Transverse colon (tissue), 4 donors: ENCODE measurements at regions of chr7 and their contacts with region 1.

Region 1: DNA sequence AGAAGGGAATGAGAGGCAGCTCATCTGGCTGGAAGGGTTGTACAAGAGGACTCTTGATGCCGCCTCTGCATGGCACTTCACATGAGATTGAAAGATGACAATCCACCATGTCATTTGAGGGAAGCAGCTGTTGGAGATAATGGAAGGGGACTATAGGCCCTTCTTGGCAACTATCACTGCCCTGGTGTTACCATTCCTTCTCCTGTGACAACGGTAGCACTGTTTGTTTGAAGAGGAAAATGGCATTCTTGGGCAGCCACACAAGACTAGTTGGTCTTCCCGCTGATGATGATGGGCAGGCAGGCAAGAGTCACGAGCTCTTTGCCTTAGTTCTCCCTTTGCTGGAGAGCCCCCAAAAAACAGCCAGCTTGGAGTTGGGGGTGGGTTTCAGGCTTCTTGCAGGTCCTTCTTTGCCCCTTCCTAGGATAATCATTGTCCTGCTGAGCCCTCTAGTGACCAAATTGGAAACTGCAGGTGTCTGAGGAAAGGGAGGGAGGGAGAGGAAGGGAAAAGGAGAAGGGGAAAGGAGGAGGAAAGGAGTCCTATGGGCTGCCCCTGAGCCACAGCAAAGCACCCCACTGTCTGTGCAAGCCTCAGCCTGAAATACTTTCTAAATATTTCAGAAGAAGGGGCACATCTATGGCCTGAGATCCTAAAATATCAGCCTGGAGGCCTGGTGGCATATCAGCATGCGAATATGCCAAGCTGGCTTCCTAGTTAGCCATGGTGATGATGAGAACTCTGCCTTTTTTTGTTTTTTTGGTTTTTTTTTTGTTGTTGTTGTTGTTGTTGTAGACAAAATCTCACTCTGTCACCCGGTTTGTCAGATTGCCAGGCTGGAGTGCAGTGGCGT is 165.6 kb upstream of the KMT2E start:
- DNase-seq: peak; percentile 52
- H3K4me3 ChIP-seq: no peak overlapping the region
- H3K27ac ChIP-seq: no peak overlapping the region
- H3K4me1 ChIP-seq: no peaks in the 10 kb centered on the region
- H3K27me3 ChIP-seq: peaks cover 5% of the 10 kb centered on the region
- CTCF ChIP-seq: peak; percentile 64 to 85 (median 83)
- EP300 ChIP-seq: no peak
- POLR2A ChIP-seq: no peak

Region 2: DNA sequence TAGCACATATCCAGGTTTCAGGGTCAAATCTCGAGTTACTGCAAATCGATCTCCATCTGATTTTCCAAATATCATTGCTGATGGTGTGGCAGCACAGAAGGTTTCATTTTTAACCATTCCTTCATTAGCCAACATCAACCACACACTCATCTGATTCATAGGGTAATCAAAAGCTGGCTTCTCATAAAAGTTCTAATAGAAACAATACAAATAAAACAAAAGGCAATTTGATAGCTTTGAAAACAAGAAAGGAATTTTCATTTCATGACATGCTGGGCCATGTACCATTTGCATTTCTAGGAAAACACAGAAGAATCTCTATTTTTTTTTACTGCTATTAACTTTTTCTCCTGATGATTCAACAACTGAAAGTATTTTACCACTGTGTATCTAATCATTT is 1254.7 kb before region 1 on chr7:
- in situ Hi-C with region 1: loop called in 1 of 4 experiments (anchors 25 kb)
- intact Hi-C with region 1: no loop called
- DNase-seq: no peak
- H3K4me3 ChIP-seq: no peak overlapping the region
- H3K27ac ChIP-seq: no peak overlapping the region
- H3K4me1 ChIP-seq: no peaks in the 10 kb centered on the region
- H3K27me3 ChIP-seq: no peaks in the 10 kb centered on the region
- CTCF ChIP-seq: no peak
- EP300 ChIP-seq: no peak
- POLR2A ChIP-seq: no peak

Region 3: DNA sequence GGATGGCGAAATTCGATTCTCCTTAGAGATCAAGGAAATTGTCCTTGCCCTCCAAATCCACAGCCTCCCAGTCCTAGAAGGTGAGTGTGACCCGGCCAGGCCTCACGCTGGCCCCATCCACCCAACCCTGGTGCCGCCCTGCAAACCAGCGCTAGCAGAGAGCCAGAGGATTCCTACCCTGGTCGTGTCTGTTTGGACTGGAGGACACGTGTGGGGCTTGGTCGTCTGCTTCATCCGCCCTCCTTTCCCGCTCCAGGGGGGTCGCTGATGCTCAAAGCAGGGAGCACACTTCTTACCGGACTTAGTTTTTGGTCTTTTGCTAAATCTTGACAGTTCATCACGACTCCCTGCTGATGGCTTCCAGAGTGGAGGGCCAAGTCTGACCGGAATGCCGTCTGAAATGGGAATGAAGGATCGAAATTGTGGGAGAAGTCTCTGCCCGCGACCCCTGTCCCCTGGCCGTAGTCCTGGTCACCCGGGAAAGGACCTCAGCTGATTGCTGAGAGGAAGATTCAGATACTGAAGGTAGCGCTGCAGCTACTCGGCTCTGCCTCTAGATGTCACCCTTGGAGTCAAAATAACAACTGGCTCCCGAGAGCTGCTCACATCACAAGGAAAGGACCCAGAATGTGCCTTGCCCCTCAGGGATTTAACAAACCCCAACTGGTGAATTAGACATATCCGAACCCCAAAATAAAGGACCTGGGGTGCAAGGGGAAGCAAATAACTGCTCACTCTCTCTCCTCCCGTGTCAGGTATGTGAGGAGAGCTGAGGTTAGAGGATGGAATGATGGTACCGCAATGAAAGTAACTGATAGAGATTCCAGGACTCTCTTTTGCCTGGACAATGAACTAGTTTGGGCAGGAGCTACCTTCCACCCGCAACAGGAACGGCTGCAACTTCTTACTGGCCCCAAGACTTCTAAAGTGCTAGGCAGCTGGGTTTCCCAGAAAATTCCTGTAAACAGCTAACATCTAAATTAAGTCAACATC is 617.0 kb before region 1 on chr7:
- in situ Hi-C with region 1: loop called in 2 of 4 experiments (anchors 25 kb)
- intact Hi-C with region 1: no loop called
- DNase-seq: peak; percentile 30
- H3K4me3 ChIP-seq: no peak overlapping the region
- H3K27ac ChIP-seq: no peak overlapping the region
- H3K4me1 ChIP-seq: no peaks in the 10 kb centered on the region
- H3K27me3 ChIP-seq: peaks cover 6% of the 10 kb centered on the region
- CTCF ChIP-seq: peak; percentile 61 to 78 (median 73)
- EP300 ChIP-seq: no peak
- POLR2A ChIP-seq: no peak